Heart right ventricle (tissue), 16 donors: ENCODE measurements at regions of chr3 and their contacts with region 1.

Region 1: DNA sequence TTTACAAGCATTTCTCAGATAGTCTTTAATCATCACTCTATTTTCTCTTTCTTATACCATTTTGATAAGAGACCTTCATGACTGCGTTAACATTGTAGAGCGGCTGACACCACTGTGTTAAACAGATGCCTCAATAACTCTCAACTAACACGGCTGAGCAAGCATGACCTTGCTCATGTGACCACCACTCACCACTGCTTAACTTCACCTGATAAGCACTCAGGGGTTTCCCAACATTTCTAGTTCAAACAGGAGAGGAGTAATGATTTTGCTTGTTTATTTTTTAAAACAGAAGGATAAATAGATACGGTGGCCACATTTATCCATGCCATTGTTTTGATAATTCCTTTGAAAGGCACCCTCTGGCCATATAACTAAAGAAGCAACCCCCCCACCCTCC is 37.7 kb upstream of the TMEM45A start:
- DNase-seq: no peak
- ATAC-seq: no peak
- H3K4me3 ChIP-seq: no peak overlapping the region
- H3K27ac ChIP-seq: no peak overlapping the region
- H3K4me1 ChIP-seq: no peaks in the 10 kb centered on the region
- H3K27me3 ChIP-seq: no peaks in the 10 kb centered on the region
- CTCF ChIP-seq: no peak

Region 2: DNA sequence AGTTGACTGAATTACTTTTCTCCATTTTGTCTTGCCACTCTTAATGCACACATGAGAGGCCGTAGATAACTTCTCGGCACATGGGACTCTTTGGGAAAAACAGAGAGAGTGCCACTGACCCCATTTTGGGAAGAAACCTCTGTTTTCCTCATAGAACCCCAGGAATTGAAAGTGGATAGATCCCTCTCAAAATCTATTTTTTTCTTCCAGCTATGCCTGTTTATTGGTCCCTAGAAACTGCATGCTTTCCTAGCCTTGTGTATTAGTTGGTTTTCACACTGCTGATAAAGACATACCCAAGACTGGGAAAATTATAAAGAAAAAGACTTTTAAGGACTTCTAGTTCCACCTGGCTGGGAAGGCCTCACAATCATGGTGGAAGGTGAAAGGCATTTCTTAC is 14.0 kb after region 1 on chr3:
- intact Hi-C with region 1: loop called in 1 of 10 experiments (anchors 1 kb)
- DNase-seq: no peak
- ATAC-seq: no peak
- H3K4me3 ChIP-seq: no peak overlapping the region
- H3K27ac ChIP-seq: no peak overlapping the region
- H3K4me1 ChIP-seq: peaks cover 0 to 7% (median 0%) of the 10 kb centered on the region in 9 donors
- H3K27me3 ChIP-seq: no peaks in the 10 kb centered on the region
- CTCF ChIP-seq: no peak